ENCODE measurements at regions of chr20 and their contacts with region 1.

Region 1: DNA sequence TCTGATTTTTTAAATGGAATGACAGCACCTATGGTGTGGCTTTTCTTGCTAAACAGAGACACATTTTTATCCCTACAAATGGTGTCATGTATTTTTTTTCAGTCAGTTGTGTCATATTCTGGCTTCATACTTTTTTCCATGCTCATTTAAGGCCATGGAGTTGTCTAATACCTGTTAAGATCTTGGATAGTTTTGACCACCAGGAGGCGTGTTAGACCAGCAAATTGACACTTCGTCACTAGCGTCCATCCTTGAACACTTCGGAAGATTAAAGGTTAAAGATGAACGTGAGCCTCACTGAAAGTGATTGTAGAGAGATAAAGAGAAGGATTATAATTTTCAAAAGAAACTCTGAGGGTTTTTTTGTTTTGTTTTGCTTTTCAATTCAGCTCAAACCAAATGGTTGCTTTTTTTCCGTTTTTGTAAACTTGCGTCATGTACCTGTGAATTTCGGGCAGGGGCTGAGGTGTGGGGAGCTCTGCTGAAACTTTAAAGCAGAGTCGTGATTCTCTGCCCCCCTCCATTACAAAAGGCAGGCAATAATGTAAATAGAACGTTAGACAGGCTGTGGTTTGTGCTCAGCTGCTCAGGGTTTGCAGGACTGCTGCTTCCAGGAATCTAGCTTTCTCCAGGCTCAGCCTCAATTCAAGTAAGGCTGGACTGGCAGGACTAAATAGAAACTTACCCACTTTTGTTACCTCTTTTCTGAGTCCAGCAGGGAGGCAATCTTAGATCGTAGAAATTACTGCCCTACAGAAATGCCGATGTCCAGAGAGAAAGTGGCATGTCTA is 245.1 kb downstream of the FOXA2 start:
- DNase-seq: no peak

Region 2: DNA sequence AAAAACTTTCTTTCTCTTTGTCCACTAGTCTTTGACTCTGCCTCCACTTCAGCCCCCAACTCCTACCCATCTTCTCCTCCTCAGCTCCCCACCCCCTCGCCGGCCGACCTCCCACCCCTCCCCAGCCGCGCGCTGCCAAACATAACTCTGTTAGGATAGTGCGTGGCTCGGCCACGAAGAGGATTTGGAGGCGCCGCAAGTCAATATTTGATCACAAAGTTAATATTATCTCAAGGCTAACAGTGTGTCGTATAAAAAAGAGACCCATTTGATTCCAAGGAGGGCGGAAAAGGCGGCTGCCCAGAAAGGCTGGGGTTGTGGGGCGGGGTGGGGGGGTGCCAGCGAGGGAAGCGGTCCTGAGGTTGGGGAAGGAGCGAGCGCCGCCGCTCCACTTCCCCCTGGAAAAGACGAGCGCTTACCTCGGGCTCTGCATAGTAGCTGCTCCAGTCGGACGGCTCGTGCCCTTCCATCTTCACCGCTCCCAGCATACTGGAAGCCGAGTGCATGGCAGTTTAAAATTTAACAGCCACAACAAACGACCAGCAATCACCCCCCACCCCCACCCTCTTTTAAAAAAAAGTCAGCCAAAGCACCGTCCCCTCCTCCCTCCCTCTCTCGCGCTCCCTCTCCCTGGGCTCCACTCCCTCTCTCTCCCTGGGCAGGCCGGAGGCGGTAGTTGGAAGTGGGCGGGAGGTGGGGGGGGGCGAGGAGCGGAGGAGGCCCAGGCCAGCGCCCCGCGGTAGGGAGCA is 244.7 kb after region 1 on chr20:
- intact Hi-C with region 1: loop called in 1 of 2 experiments (anchors 5 kb)
- DNase-seq: no peak

Region 3: DNA sequence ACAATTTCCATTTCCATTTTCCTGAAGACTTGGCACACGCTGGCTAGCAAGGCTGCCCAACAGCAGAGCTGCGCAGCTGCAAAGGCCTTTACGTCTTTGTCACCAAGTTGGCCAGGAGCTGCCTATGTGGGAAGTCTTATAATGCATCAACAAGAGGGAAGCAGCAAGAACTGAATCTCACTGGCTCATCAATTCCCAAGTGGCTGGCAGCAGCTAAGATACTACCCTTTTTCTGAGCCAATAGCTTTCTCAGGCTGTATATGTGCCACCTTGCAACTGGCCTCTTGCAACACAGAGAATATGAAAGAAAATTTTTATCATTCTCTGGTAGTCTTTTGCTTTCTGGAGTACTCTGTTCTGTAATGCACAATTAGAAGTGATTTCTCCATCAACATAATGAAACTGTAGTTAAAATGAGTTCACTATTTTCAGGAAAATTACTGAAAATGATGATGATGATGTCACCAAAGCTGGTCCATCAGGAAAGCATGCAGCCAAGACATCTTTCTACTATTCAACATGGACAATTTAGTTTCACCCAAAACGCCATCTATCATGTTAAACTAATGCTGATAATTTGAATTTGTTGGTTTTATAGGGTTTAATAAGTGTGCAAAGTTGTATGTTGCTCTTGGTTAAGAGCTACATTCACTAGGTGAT is 342.4 kb after region 1 on chr20:
- intact Hi-C with region 1: loop called in 1 of 2 experiments (anchors 2 kb)
- DNase-seq: no peak